ENCODE measurements at regions of chr6 and their contacts with region 1.

Region 1: GRCh38 chr6:105363100-105363754 is 39.7 kb downstream of the PREP start:
- DNase-seq: no peak
- ATAC-seq: no peak
- H3K4me3 ChIP-seq: no peak overlapping the region
- H3K27ac ChIP-seq: no peak overlapping the region
- H3K4me1 ChIP-seq: peaks cover 0 to 5% (median 0%) of the 10 kb centered on the region in 12 donors
- H3K27me3 ChIP-seq: no peaks in the 10 kb centered on the region
- CTCF ChIP-seq: peak in 7 of 12 donors; percentile 30 to 49 (median 41)
- POLR2A ChIP-seq: no peak

Region 2: GRCh38 chr6:105087571-105088211 is 275.5 kb before region 1 on chr6:
- intact Hi-C with region 1: loop called in 3 of 10 experiments (anchors 2 to 5 kb)
- DNase-seq: no peak
- ATAC-seq: peak in 2 of 4 donors; percentile 57 to 59
- H3K4me3 ChIP-seq: no peak overlapping the region
- H3K27ac ChIP-seq: no peak overlapping the region
- H3K4me1 ChIP-seq: no peaks in the 10 kb centered on the region
- H3K27me3 ChIP-seq: no peaks in the 10 kb centered on the region
- CTCF ChIP-seq: peak; percentile 68 to 91 (median 81)
- POLR2A ChIP-seq: no peak

Region 3: DNA sequence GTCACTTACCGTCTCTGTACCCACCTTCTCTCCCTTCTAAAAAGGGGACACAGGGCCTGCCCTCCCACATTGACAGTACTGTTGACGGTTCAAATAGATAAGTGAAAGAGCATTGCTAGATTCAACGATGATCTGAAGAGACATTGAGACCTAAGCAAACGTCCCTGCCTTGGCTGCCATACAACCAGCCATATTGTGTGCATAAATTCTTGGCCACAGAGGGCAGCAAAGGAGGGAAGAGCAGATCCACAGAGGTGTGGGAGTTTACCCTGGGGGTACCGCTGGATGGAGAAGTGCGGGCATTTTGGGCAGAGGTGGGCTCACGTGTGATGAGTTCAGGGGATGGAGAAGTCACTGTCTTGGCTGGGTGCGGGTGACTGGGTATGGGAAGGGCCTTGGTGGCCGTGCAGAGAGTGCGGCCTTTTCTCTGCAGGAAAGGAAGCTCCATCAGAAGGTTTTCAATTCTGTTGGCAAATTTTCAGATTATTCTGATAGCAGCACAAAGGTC is 269.0 kb before region 1 on chr6:
- intact Hi-C with region 1: loop called in 2 of 10 experiments (anchors 5 kb)
- DNase-seq: no peak
- ATAC-seq: no peak
- H3K4me3 ChIP-seq: no peak overlapping the region
- H3K27ac ChIP-seq: no peak overlapping the region
- H3K4me1 ChIP-seq: no peaks in the 10 kb centered on the region
- H3K27me3 ChIP-seq: no peaks in the 10 kb centered on the region
- CTCF ChIP-seq: no peak
- POLR2A ChIP-seq: no peak

Region 4: GRCh38 chr6:105121981-105122380 is 241.2 kb before region 1 on chr6:
- intact Hi-C with region 1: loop called in 1 of 10 experiments (anchors 10 kb)
- DNase-seq: no peak
- ATAC-seq: no peak
- H3K4me3 ChIP-seq: no peak overlapping the region
- H3K27ac ChIP-seq: no peak overlapping the region
- H3K4me1 ChIP-seq: peaks cover 0 to 3% (median 0%) of the 10 kb centered on the region in 12 donors
- H3K27me3 ChIP-seq: no peaks in the 10 kb centered on the region
- CTCF ChIP-seq: no peak
- POLR2A ChIP-seq: no peak

Region 5: DNA sequence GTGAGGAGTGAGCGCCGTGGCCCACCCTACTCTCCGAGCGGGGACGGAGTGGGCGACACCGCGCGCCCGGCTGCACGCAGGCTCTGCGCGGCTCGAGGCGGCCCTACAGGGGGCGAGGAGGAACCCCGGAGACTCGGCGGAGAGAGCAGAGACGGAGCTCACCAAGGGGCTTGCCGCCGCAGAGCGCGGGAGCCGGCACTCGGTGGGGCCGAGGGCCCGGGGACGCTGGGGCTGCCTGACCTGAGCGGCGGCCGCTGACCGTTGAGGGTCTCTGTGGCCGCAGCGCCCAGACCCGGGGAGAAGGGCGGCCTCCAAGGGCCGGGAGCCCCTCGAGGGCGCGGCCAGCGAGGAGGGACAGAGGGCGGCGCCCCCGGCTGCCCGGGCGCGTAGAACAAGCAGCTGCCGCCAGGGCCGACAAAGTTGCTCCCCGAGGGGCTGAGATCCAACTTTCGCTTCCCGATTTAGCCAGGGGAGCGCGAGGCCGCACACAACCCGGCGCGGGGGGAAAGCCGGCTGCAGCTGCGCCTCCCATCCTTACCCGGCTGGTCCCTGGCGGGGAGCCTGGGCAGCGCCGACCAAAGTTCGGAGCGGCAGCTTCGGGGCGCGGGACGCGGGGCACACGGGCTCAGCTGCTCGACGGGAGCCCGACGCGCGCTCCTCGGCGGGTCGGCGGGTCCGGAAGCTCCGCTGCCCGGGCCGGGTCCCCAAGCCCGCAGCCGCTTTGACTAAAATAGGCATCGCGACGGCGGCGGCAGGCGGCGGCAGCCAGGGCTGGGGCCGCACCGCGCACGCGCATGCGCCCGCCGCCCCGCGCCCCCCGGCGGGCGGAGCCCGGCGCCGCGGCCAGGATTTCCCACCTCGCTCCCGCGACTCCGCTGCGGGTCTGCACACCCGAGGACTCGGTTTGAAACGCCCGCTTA is 226.5 kb before region 1 on chr6:
- intact Hi-C with region 1: loop called in 8 of 10 experiments (anchors 5 to 10 kb)
- DNase-seq: peak; percentile 75 to 88 (median 79)
- ATAC-seq: peak; percentile 52 to 85 (median 82)
- H3K4me3 ChIP-seq: peak overlapping the region; percentile 58 to 93 (median 87)
- H3K27ac ChIP-seq: peak overlapping the region; percentile 62 to 95 (median 91)
- H3K4me1 ChIP-seq: peaks cover 0 to 15% (median 7%) of the 10 kb centered on the region in 12 donors
- H3K27me3 ChIP-seq: peaks cover 0 to 33% (median 0%) of the 10 kb centered on the region in 9 donors
- CTCF ChIP-seq: peak in 8 of 12 donors; percentile 6 to 35 (median 20)
- POLR2A ChIP-seq: peak in 1 of 2 donors; percentile 68

Region 6: GRCh38 chr6:105179244-105180065 is 183.8 kb before region 1 on chr6 and contains the start of gene POPDC3:
- intact Hi-C with region 1: loop called in 2 of 10 experiments (anchors 5 kb)
- DNase-seq: peak; percentile 25 to 65 (median 49)
- ATAC-seq: peak; percentile 77 to 83 (median 82)
- H3K4me3 ChIP-seq: peak within 1 kb of the TSS; percentile 28 to 69 (median 61)
- H3K27ac ChIP-seq: peak within 1 kb of the TSS; percentile 76 to 95 (median 88)
- H3K4me1 ChIP-seq: peaks cover 0 to 12% (median 0%) of the 10 kb centered on the region in 12 donors
- H3K27me3 ChIP-seq: peaks cover 0 to 68% (median 18%) of the 10 kb centered on the region in 9 donors
- CTCF ChIP-seq: no peak
- POLR2A ChIP-seq: no peak
- total RNA-seq, gene POPDC3: 29.3 to 59.7 (median 51.5) TPM

Region 7: GRCh38 chr6:105301072-105301503 is 62.1 kb before region 1 on chr6:
- intact Hi-C with region 1: loop called in 1 of 10 experiments (anchors 10 kb)
- DNase-seq: peak in 4 of 5 donors; percentile 35 to 63 (median 48)
- ATAC-seq: peak; percentile 93 to 95 (median 94)
- H3K4me3 ChIP-seq: no peak overlapping the region
- H3K27ac ChIP-seq: peak overlapping the region in 11 of 12 donors; percentile 31 to 86 (median 67)
- H3K4me1 ChIP-seq: peaks cover 0 to 19% (median 8%) of the 10 kb centered on the region in 12 donors
- H3K27me3 ChIP-seq: no peaks in the 10 kb centered on the region
- CTCF ChIP-seq: no peak
- POLR2A ChIP-seq: no peak

Region 8: GRCh38 chr6:106670236-106670635 is 1307.0 kb after region 1 on chr6:
- intact Hi-C with region 1: no loop called
- DNase-seq: no peak
- ATAC-seq: no peak
- H3K4me3 ChIP-seq: no peak overlapping the region
- H3K27ac ChIP-seq: no peak overlapping the region
- H3K4me1 ChIP-seq: no peaks in the 10 kb centered on the region
- H3K27me3 ChIP-seq: no peaks in the 10 kb centered on the region
- CTCF ChIP-seq: no peak
- POLR2A ChIP-seq: no peak